ENCODE measurements at regions of chr3 and their contacts with region 1.

Region 1: DNA sequence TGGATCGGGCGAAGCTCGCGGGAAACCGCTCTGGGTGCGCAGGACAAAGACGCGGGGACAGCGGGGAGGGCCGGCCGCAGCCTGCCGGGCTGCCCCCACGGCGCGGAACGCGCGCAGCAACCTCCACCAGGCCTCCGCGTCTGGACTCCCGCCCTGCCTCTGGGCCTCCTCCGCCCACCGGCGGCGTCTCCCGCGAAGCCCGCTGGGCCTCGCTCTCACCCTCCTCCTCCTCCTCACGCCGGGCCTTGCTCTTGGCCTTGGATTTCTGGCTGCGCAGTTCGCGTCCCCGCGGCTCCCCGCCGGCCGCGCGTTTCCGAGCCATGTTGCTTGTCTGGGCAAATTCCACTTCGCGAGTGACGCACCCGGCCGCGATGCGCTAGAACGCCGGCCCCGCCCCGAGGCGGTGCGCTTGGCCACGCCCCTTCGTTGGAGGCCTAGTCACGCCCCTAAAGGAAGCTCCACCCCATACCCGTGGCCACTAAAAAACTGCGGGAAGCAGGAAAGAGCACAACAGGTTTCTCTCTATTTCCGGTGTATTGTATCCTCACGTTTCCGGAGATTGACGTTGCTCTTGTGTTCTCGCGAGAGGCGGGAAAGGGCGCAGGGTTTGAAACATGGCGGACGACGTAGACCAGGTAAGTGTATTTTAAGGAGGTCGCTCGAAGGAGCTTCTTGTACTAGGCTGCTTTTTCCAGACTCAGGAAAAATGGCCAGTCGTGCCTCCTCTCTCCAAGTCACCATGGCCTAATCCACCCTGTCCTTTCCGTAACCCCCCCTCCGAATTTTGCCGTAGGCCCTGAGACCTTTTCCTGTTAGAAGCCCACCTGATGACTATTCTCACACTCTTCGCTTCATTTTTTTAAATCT is at the starts of genes LSM3 and XPC:
- DNase-seq: peak; percentile 98
- ATAC-seq: peak; percentile 96
- H3K4me3 Mint-ChIP-seq: peak within 1 kb of the TSS; percentile 97
- H3K27ac Mint-ChIP-seq: peak within 1 kb of the TSS; percentile 98
- H3K4me1 Mint-ChIP-seq: peaks cover 63% of the 10 kb centered on the region
- H3K27me3 Mint-ChIP-seq: no peaks in the 10 kb centered on the region
- CTCF ChIP-seq: no peak
- total RNA-seq, gene LSM3: 12.9 and 14.2 TPM in 2 replicates
- total RNA-seq, gene XPC: 35.4 and 35.6 TPM in 2 replicates

Region 2: GRCh38 chr3:13495921-13496723 is 682.4 kb before region 1 on chr3:
- CTCF ChIA-PET with region 1: no interaction called
- POLR2A ChIA-PET with region 1: no interaction called
- intact Hi-C with region 1: loop called (anchors 10 kb)
- DNase-seq: peak; percentile 53
- ATAC-seq: peak; percentile 91
- H3K4me3 Mint-ChIP-seq: no peak overlapping the region
- H3K27ac Mint-ChIP-seq: no peak overlapping the region
- H3K4me1 Mint-ChIP-seq: no peaks in the 10 kb centered on the region
- H3K27me3 Mint-ChIP-seq: peaks cover 1% of the 10 kb centered on the region
- CTCF ChIP-seq: peak; percentile 41

Region 3: GRCh38 chr3:14093831-14094230 is 84.6 kb before region 1 on chr3:
- CTCF ChIA-PET with region 1: no interaction called
- POLR2A ChIA-PET with region 1: no interaction called
- intact Hi-C with region 1: no loop called
- DNase-seq: no peak
- ATAC-seq: no peak
- H3K4me3 Mint-ChIP-seq: no peak overlapping the region
- H3K27ac Mint-ChIP-seq: no peak overlapping the region
- H3K4me1 Mint-ChIP-seq: no peaks in the 10 kb centered on the region
- H3K27me3 Mint-ChIP-seq: peaks cover 59% of the 10 kb centered on the region
- CTCF ChIP-seq: no peak

Region 4: GRCh38 chr3:14124615-14125190 is 53.8 kb before region 1 on chr3 and contains the starts of genes CHCHD4 and TMEM43:
- CTCF ChIA-PET with region 1: interaction called, 5 read pairs
- POLR2A ChIA-PET with region 1: interaction called, 61 read pairs
- intact Hi-C with region 1: loop called (anchors 1 kb)
- DNase-seq: peak; percentile 92
- ATAC-seq: peak; percentile 86
- H3K4me3 Mint-ChIP-seq: peak within 1 kb of the TSS; percentile 94
- H3K27ac Mint-ChIP-seq: peak within 1 kb of the TSS; percentile 87
- H3K4me1 Mint-ChIP-seq: peaks cover 40% of the 10 kb centered on the region
- H3K27me3 Mint-ChIP-seq: no peaks in the 10 kb centered on the region
- CTCF ChIP-seq: no peak
- total RNA-seq, gene CHCHD4: 9.2 and 9.8 TPM in 2 replicates
- total RNA-seq, gene TMEM43: 30.7 and 32.3 TPM in 2 replicates

Region 5: GRCh38 chr3:14157951-14158350 is 20.5 kb before region 1 on chr3:
- CTCF ChIA-PET with region 1: no interaction called
- POLR2A ChIA-PET with region 1: no interaction called
- intact Hi-C with region 1: loop called (anchors 2 kb)
- DNase-seq: no peak
- ATAC-seq: no peak
- H3K4me3 Mint-ChIP-seq: no peak overlapping the region
- H3K27ac Mint-ChIP-seq: no peak overlapping the region
- H3K4me1 Mint-ChIP-seq: no peaks in the 10 kb centered on the region
- H3K27me3 Mint-ChIP-seq: no peaks in the 10 kb centered on the region
- CTCF ChIP-seq: no peak

Region 6: DNA sequence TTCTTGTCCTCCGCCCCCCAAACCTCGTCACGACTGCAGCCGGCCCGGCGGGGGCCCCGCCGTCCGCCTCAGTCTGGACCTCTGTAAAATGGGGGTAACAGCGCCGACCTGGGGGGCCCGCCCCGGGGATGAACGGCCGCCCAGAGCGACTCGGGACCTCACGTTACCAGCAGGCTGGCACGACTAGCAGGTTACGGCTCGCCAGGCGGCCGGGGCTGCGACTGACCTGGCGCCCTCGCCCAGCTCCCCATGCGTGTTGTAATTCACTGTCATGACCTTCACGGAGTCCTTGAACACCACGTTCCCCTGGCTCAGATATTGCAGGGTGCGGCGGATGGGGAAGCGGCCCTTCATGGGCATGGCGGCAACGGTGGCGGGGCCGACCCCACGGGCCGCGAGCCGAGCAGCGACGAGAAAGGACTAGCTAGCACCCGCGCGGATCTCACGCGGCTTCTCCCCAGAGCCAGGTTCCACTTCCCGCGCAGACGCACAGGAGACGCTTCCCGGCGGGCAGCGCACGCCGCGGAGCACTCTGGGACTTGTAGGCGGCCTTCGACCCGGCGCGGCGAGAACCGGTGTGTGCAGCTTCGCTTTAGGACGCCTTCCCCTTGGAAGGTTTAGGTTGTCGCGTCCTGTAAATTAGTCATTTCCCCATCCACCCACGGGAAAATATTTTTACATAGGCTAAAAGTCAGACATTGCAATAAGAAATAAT is 886.5 kb after region 1 on chr3 and contains the start of gene MRPS25:
- CTCF ChIA-PET with region 1: no interaction called
- POLR2A ChIA-PET with region 1: no interaction called
- intact Hi-C with region 1: loop called (anchors 1 kb)
- DNase-seq: peak; percentile 84
- ATAC-seq: peak; percentile 97
- H3K4me3 Mint-ChIP-seq: peak within 1 kb of the TSS; percentile 98
- H3K27ac Mint-ChIP-seq: peak within 1 kb of the TSS; percentile 95
- H3K4me1 Mint-ChIP-seq: peaks cover 25% of the 10 kb centered on the region
- H3K27me3 Mint-ChIP-seq: no peaks in the 10 kb centered on the region
- CTCF ChIP-seq: no peak
- total RNA-seq, gene MRPS25: 72.4 and 85.9 TPM in 2 replicates

Measured in activated B cell treated with CpG ODN at 0.5 μM for 24 hours (primary cell).